Mammary epithelial cell (primary cell): ENCODE measurements at regions of chr20 and their contacts with region 1.

Region 1: GRCh38 chr20:43252761-43253160 is 63.1 kb upstream of the PTPRT start:
- DNase-seq: no peak
- H3K4me3 ChIP-seq: no peak overlapping the region
- H3K27ac ChIP-seq: no peak overlapping the region
- H3K4me1 ChIP-seq: no peaks in the 10 kb centered on the region
- H3K27me3 ChIP-seq: no peaks in the 10 kb centered on the region
- CTCF ChIP-seq: no peak

Region 2: GRCh38 chr20:43151901-43152300 is 100.9 kb before region 1 on chr20:
- CTCF ChIA-PET with region 1: no interaction called
- dilution Hi-C with region 1: loop called (anchors 5 kb)
- in situ Hi-C with region 1: no loop called
- intact Hi-C with region 1: no loop called
- DNase-seq: no peak
- H3K4me3 ChIP-seq: no peak overlapping the region
- H3K27ac ChIP-seq: no peak overlapping the region
- H3K4me1 ChIP-seq: no peaks in the 10 kb centered on the region
- H3K27me3 ChIP-seq: no peaks in the 10 kb centered on the region
- CTCF ChIP-seq: no peak

Region 3: DNA sequence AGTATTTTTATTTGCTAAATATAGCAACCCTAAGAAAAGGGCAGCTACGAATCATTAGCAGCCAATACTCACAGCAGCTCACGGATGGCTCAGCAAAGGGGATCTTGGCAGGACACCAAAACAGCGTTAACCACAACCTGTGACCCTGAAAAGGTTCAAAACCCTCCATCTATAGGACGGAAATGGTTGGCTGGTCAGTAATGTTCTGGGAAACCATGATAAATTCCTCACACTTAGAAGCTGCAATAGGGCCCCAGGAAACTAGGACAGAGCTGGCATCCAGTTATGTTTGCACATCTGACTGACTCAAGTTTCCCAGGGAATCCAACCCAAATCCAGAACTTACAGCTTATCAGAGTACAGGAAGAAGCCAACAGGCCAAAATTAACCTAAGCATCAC is 32.1 kb before region 1 on chr20:
- CTCF ChIA-PET with region 1: no interaction called
- dilution Hi-C with region 1: loop called (anchors 5 kb)
- in situ Hi-C with region 1: no loop called
- intact Hi-C with region 1: no loop called
- DNase-seq: no peak
- H3K4me3 ChIP-seq: no peak overlapping the region
- H3K27ac ChIP-seq: no peak overlapping the region
- H3K4me1 ChIP-seq: no peaks in the 10 kb centered on the region
- H3K27me3 ChIP-seq: no peaks in the 10 kb centered on the region
- CTCF ChIP-seq: no peak